ENCODE measurements at regions of chr1 and their contacts with region 1.

Region 1: DNA sequence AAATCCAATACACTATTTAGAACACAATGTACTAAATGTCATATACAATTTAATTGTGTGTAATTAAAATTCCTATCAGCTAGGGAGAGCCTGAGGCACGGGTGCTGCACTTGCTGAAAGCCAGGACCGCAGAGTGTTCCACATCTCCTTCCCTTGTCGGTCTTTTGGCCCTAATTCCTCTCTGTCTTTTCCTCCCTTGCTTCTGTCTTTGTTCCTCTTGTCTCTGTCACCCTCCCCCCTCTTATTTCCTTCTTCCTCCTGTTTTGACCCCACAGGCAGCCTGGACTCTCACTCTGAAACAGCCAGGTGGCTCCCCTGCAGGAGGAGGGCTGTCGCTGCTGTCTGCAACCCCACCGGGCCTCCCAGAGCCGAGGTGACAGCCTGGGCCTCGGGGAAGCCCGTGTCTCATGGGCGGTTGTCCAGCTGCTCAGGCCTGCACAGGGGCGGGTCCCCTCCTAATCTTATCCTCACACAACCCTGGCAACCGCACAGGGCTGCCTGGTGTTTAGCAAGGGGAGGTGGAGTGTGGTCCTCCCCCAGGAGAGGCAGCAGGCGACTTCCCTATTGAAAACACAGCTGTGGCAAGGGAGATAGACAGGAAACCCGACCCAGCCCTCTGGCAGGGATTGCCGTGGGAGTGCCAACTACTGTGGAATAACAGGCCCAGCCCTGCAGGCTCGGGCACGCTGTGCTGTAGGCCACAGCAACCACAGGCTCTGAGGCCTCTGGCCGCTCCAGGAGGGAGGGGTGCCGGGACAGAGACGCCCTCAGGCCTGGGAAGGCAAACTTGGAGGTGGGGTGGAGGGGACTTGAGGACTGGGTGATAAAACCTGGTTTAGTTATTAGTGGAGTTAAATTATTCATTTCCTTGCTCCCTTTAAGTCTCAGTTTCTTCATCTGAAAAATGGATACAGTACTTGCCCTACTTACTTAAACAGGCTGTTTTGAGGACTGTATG is 68.8 kb upstream of the WDR26 start:
- DNase-seq: peak; percentile 96
- H3K4me3 ChIP-seq: peak overlapping the region in 1 of 2 donors; percentile 3
- H3K27ac ChIP-seq: peak overlapping the region; percentile 82 to 84
- H3K4me1 ChIP-seq: peaks cover 17% of the 10 kb centered on the region
- H3K27me3 ChIP-seq: no peaks in the 10 kb centered on the region
- CTCF ChIP-seq: peak in 1 of 4 experiments; percentile 16
- POLR2A ChIP-seq: no peak

Region 2: GRCh38 chr1:223755992-223756775 is 747.3 kb before region 1 on chr1:
- intact Hi-C with region 1: no loop called
- DNase-seq: no peak
- H3K4me3 ChIP-seq: no peak overlapping the region
- H3K27ac ChIP-seq: no peak overlapping the region
- H3K4me1 ChIP-seq: no peaks in the 10 kb centered on the region
- H3K27me3 ChIP-seq: no peaks in the 10 kb centered on the region
- CTCF ChIP-seq: no peak
- POLR2A ChIP-seq: no peak

Region 3: DNA sequence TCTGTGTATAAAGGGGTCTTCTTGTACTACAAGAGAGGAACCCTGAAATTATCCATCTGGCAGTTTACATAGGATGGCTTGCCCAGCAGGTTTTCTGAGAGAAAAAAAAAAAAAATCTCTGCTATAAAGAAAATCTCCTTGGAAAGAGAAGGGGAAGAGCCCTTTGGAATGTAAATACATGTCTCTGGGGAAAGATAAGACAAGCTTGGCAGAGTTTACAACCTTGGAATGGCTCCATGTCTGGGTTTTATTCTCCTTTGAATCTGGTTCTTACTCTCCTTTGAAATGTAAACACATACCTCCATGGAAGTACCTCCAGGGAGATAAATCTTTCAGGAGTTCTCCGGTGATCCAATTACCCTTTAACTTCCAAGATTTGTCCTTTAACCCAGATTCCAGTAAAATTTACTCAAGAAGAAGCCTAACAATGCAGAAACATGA is 380.9 kb after region 1 on chr1:
- intact Hi-C with region 1: no loop called
- DNase-seq: peak; percentile 60
- H3K4me3 ChIP-seq: no peak overlapping the region
- H3K27ac ChIP-seq: no peak overlapping the region
- H3K4me1 ChIP-seq: peaks cover 7% of the 10 kb centered on the region
- H3K27me3 ChIP-seq: no peaks in the 10 kb centered on the region
- CTCF ChIP-seq: no peak
- POLR2A ChIP-seq: no peak

Region 4: GRCh38 chr1:225441314-225442122 is 938.1 kb after region 1 on chr1:
- intact Hi-C with region 1: loop called (anchors 10 kb)
- DNase-seq: no peak
- H3K4me3 ChIP-seq: no peak overlapping the region
- H3K27ac ChIP-seq: no peak overlapping the region
- H3K4me1 ChIP-seq: no peaks in the 10 kb centered on the region
- H3K27me3 ChIP-seq: no peaks in the 10 kb centered on the region
- CTCF ChIP-seq: no peak
- POLR2A ChIP-seq: no peak